Dendritic cell treated with granulocyte-macrophage colony-stimulating factor and Interleukin-4, amounts not matched to agents 40 ng/mL and 50 ng/mL, for 4 days (primary cell): ENCODE measurements at regions of chr3 and their contacts with region 1.

Region 1: GRCh38 chr3:40580494-40581091 is 55.8 kb downstream of the ZNF621 start:
- H3K4me3 Mint-ChIP-seq: no peak overlapping the region
- H3K27ac Mint-ChIP-seq: no peak overlapping the region
- H3K4me1 Mint-ChIP-seq: peaks cover 9% of the 10 kb centered on the region
- H3K27me3 Mint-ChIP-seq: peaks cover 6% of the 10 kb centered on the region

Region 2: GRCh38 chr3:40329071-40329470 is 251.5 kb before region 1 on chr3:
- intact Hi-C with region 1: loop called (anchors 5 kb)
- H3K4me3 Mint-ChIP-seq: no peak overlapping the region
- H3K27ac Mint-ChIP-seq: no peak overlapping the region
- H3K4me1 Mint-ChIP-seq: no peaks in the 10 kb centered on the region
- H3K27me3 Mint-ChIP-seq: no peaks in the 10 kb centered on the region

Region 3: GRCh38 chr3:40387001-40387894 is 193.3 kb before region 1 on chr3 and contains the start of gene ENTPD3:
- intact Hi-C with region 1: no loop called
- H3K4me3 Mint-ChIP-seq: no peak within 1 kb of the TSS
- H3K27ac Mint-ChIP-seq: no peak within 1 kb of the TSS
- H3K4me1 Mint-ChIP-seq: peaks cover 6% of the 10 kb centered on the region
- H3K27me3 Mint-ChIP-seq: peaks cover 40% of the 10 kb centered on the region

Region 4: GRCh38 chr3:40597441-40597840 is 16.8 kb after region 1 on chr3:
- intact Hi-C with region 1: no loop called
- H3K4me3 Mint-ChIP-seq: no peak overlapping the region
- H3K27ac Mint-ChIP-seq: no peak overlapping the region
- H3K4me1 Mint-ChIP-seq: peaks cover 9% of the 10 kb centered on the region
- H3K27me3 Mint-ChIP-seq: peaks cover 2% of the 10 kb centered on the region

Region 5: DNA sequence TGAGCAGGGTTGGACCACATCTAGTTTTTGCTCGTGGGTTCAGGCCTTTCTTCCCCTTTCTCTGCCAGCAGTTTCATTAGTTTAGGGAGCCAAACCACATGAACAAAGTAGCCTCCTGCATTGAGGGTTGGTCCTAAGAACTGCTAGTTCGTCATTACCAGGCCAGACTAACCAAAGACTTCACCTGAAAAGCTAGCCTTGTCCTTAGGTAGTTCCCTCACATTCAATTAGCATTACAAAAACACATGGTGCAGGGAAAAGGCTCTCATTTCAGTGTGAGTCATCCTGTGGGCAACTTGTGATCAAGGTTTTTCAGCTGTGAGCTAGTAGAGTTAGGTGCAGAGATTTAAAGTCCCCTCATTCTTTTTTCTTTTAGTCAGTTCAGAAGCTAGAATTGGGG is 339.4 kb after region 1 on chr3:
- intact Hi-C with region 1: loop called (anchors 10 kb)
- H3K4me3 Mint-ChIP-seq: no peak overlapping the region
- H3K27ac Mint-ChIP-seq: no peak overlapping the region
- H3K4me1 Mint-ChIP-seq: peaks cover 6% of the 10 kb centered on the region
- H3K27me3 Mint-ChIP-seq: no peaks in the 10 kb centered on the region

Region 6: GRCh38 chr3:41026394-41027177 is 446.0 kb after region 1 on chr3:
- intact Hi-C with region 1: loop called (anchors 10 kb)
- H3K4me3 Mint-ChIP-seq: no peak overlapping the region
- H3K27ac Mint-ChIP-seq: no peak overlapping the region
- H3K4me1 Mint-ChIP-seq: peaks cover 9% of the 10 kb centered on the region
- H3K27me3 Mint-ChIP-seq: no peaks in the 10 kb centered on the region

Region 7: GRCh38 chr3:41881233-41881821 is 1300.7 kb after region 1 on chr3:
- intact Hi-C with region 1: loop called (anchors 1 kb)
- H3K4me3 Mint-ChIP-seq: no peak overlapping the region
- H3K27ac Mint-ChIP-seq: no peak overlapping the region
- H3K4me1 Mint-ChIP-seq: no peaks in the 10 kb centered on the region
- H3K27me3 Mint-ChIP-seq: no peaks in the 10 kb centered on the region